Posterior vena cava (tissue), 2 donors: ENCODE measurements at regions of chr3 and their contacts with region 1.

Region 1: GRCh38 chr3:141127344-141128125 is 76.4 kb downstream of the SPSB4 start:
- DNase-seq: no peak

Region 2: DNA sequence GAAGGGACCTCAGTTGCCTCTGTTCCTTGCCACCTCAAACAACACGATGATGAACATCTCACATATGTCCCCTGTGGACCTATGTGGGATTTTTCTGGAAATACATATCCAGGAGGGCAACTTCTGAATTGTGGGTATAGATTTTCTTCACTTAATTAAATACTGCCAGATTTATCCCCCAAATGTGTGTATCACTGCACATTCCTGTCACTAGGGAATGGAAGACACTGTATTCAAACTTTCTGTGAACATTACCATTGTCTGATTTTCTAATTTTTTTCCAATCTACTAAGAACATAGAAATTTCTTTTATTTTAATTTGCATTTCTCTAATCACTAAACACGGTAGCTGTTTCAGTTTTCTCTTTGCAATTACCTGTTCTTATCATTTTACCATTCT is 1885.8 kb before region 1 on chr3:
- intact Hi-C with region 1: no loop called
- DNase-seq: no peak

Region 3: DNA sequence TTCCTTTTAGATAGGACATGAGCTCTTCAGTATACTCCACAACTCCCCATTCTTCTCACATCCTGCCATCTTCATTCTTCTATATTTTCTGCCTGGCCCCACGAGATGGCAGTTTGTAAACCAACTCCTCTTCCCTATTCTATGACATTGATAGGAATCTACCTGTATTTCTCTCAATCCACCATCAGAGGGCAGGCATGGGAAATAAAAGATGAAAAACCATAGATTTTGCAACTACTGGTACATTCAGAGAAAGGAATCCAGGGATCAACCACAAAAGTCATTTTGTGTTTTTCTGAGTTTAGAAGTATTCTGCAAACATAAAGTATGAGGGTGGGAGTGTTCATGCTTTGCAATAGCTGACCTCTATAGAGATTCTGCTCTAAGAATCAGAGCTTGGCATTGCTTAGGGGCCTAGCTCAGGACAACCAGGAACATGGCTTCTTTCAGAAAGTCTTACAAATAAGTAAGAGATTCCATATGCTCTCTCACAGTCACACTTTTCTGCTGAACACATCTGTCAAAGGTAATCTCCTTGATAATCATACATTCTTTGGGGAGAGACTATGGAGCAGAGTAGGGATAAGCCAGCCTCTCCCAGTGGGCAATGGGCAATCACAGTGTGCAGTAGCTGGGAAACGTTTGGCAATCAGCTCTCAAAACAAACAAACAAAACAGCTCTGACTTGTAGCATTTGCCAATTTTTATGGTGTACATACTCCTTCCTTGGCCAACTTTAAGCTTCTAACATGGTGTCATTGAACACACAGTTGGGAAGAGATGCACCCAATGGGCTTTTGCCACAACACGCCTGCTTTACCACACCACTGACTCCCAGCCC is 229.0 kb before region 1 on chr3:
- intact Hi-C with region 1: no loop called
- DNase-seq: no peak

Region 4: DNA sequence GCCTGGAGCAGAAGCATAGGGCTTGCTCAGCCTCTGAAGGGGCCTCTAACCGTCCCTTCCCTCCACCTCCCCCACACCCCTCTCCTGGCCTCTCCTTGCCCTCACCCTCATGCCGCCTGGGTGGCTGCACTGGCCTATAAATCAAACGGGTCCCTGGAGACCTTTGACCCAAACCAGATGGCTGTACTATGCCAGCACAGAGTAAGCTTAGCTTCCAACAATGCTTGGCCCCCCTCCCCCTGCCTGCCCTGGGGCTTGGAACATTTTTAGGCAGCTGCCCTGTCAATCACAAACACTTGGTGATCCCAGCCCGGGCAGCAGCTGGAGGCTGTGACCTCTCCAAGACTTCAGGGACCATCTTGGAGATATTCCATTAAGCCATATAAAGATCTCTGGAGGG is 43.3 kb before region 1 on chr3:
- intact Hi-C with region 1: no loop called
- DNase-seq: peak; percentile 53

Region 5: DNA sequence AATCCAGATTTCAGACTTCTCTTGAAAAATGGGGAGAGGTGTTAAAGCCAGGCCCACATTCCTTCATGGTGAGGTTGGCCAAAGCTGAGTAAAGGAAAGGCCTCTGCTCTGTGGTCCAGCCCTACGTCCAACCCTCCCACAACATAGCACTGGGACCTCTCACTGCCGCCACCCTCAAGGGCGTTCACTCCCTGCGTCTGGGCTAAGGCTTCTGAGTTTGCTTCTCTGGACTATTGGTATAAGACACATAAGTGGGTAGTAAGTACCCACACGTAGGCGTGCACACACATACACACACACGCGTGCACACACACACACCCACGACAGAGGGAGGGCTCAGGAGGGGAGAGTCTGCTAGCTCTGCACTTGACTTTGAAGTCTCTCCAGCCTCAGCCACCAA is 23.9 kb after region 1 on chr3:
- intact Hi-C with region 1: loop called in 1 of 2 experiments (anchors 1 kb)
- DNase-seq: peak; percentile 72